Heart left ventricle (tissue), 16 donors: ENCODE measurements at regions of chr5 and their contacts with region 1.

Region 1: GRCh38 chr5:160342403-160342941 is 28.0 kb downstream of the C1QTNF2 start:
- DNase-seq: no peak
- ATAC-seq: peak in 2 of 4 donors; percentile 20 to 25
- H3K4me3 ChIP-seq: no peak overlapping the region
- H3K27ac ChIP-seq: no peak overlapping the region
- H3K4me1 ChIP-seq: peaks cover 0 to 13% (median 0%) of the 10 kb centered on the region in 12 donors
- H3K27me3 ChIP-seq: no peaks in the 10 kb centered on the region
- CTCF ChIP-seq: no peak
- POLR2A ChIP-seq: no peak

Region 2: GRCh38 chr5:160075073-160075472 is 267.4 kb before region 1 on chr5:
- intact Hi-C with region 1: loop called in 2 of 10 experiments (anchors 5 kb)
- DNase-seq: no peak
- ATAC-seq: no peak
- H3K4me3 ChIP-seq: no peak overlapping the region
- H3K27ac ChIP-seq: no peak overlapping the region
- H3K4me1 ChIP-seq: peaks cover 0 to 18% (median 12%) of the 10 kb centered on the region in 12 donors
- H3K27me3 ChIP-seq: no peaks in the 10 kb centered on the region
- CTCF ChIP-seq: no peak
- POLR2A ChIP-seq: no peak

Region 3: GRCh38 chr5:160082614-160083500 is 259.6 kb before region 1 on chr5:
- intact Hi-C with region 1: loop called in 2 of 10 experiments (anchors 5 kb)
- DNase-seq: no peak
- ATAC-seq: peak in 2 of 4 donors; percentile 11 to 33
- H3K4me3 ChIP-seq: no peak overlapping the region
- H3K27ac ChIP-seq: no peak overlapping the region
- H3K4me1 ChIP-seq: peaks cover 0 to 11% (median 0%) of the 10 kb centered on the region in 12 donors
- H3K27me3 ChIP-seq: no peaks in the 10 kb centered on the region
- CTCF ChIP-seq: no peak
- POLR2A ChIP-seq: no peak

Region 4: DNA sequence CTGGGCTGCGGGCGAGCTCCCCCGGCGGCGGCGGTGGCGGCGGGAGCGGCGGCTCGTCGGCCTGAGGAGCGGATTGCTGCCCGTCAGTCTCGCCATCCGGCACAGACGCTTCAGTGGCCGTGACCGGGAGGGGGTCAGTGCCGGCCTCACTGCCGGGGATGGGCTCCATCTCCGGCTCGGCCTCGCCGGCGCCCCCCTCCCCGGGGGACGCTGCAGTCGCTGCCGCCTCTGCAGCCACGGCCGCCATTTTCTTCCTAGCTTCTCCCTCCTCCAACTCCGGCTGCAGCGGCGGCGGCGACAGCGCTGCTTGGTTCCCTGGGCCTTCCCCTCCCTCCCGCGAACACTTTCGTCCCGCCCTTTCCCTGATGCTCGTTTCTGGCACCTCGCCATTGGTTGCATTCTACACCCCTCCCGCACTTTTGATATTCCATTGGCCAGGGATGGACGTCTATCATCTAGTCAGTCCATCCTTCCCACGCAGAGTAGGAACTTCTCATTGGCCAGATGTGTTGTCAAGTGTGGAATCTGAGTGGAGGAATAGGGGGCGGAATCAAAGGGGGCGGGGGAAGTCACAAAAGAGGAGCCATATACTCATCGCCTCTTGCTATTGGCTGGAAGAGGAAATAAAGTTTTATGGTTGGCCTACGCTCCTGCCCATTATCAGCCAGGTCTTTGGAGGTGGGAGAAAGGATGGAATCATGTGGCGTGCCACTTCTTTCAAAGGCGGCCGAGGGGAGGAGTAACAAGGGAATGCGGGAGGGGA is 223.1 kb before region 1 on chr5 and contains the start of gene PWWP2A:
- intact Hi-C with region 1: loop called in 1 of 10 experiments (anchors 5 kb)
- DNase-seq: peak; percentile 98 to 100 (median 99)
- ATAC-seq: peak; percentile 97 to 99 (median 98)
- H3K4me3 ChIP-seq: peak within 1 kb of the TSS; percentile 75 to 100 (median 98)
- H3K27ac ChIP-seq: peak within 1 kb of the TSS; percentile 86 to 100 (median 98)
- H3K4me1 ChIP-seq: peaks cover 0 to 20% (median 8%) of the 10 kb centered on the region in 12 donors
- H3K27me3 ChIP-seq: no peaks in the 10 kb centered on the region
- CTCF ChIP-seq: peak in 6 of 12 donors; percentile 9 to 46 (median 26)
- POLR2A ChIP-seq: peak in 1 of 2 donors; percentile 83
- total RNA-seq, gene PWWP2A: 9.3 to 13.7 (median 11.2) TPM

Region 5: GRCh38 chr5:160199410-160199911 is 143.0 kb before region 1 on chr5:
- intact Hi-C with region 1: loop called (anchors 1 to 2 kb)
- DNase-seq: peak; percentile 66 to 89 (median 79)
- ATAC-seq: peak; percentile 74 to 98 (median 92)
- H3K4me3 ChIP-seq: peak overlapping the region in 11 of 12 donors; percentile 22 to 57 (median 45)
- H3K27ac ChIP-seq: peak overlapping the region in 2 of 12 donors; percentile 24 to 38
- H3K4me1 ChIP-seq: peaks cover 0 to 25% (median 16%) of the 10 kb centered on the region in 12 donors
- H3K27me3 ChIP-seq: no peaks in the 10 kb centered on the region
- CTCF ChIP-seq: peak; percentile 85 to 98 (median 96)
- POLR2A ChIP-seq: no peak

Region 6: GRCh38 chr5:160287378-160288051 is 55.0 kb before region 1 on chr5:
- intact Hi-C with region 1: no loop called
- DNase-seq: peak; percentile 85 to 93 (median 86)
- ATAC-seq: peak; percentile 93 to 97 (median 96)
- H3K4me3 ChIP-seq: no peak overlapping the region
- H3K27ac ChIP-seq: peak overlapping the region; percentile 53 to 90 (median 74)
- H3K4me1 ChIP-seq: peaks cover 3 to 43% (median 26%) of the 10 kb centered on the region in 12 donors
- H3K27me3 ChIP-seq: no peaks in the 10 kb centered on the region
- CTCF ChIP-seq: no peak
- POLR2A ChIP-seq: no peak

Region 7: GRCh38 chr5:160390787-160391696 is 48.6 kb after region 1 on chr5:
- intact Hi-C with region 1: loop called in 1 of 10 experiments (anchors 2 kb)
- DNase-seq: no peak
- ATAC-seq: peak in 1 of 4 donors; percentile 30
- H3K4me3 ChIP-seq: no peak overlapping the region
- H3K27ac ChIP-seq: no peak overlapping the region
- H3K4me1 ChIP-seq: peaks cover 0 to 14% (median 0%) of the 10 kb centered on the region in 12 donors
- H3K27me3 ChIP-seq: no peaks in the 10 kb centered on the region
- CTCF ChIP-seq: peak; percentile 31 to 67 (median 53)
- POLR2A ChIP-seq: no peak